Activated T-helper 1 cell treated with anti-CD3 and anti-CD28 coated beads, Interleukin-12 subunit alpha, Interleukin-12 subunit beta, Interleukin-2, Interleukin-4 antibody, amounts not matched to agents 30 ng/mL and 10 ng/mL and 1 ng/mL, durations not matched to agents 14 hours and 24 hours and 36 hours (primary cell): ENCODE measurements at regions of chr7 and their contacts with region 1.

Region 1: DNA sequence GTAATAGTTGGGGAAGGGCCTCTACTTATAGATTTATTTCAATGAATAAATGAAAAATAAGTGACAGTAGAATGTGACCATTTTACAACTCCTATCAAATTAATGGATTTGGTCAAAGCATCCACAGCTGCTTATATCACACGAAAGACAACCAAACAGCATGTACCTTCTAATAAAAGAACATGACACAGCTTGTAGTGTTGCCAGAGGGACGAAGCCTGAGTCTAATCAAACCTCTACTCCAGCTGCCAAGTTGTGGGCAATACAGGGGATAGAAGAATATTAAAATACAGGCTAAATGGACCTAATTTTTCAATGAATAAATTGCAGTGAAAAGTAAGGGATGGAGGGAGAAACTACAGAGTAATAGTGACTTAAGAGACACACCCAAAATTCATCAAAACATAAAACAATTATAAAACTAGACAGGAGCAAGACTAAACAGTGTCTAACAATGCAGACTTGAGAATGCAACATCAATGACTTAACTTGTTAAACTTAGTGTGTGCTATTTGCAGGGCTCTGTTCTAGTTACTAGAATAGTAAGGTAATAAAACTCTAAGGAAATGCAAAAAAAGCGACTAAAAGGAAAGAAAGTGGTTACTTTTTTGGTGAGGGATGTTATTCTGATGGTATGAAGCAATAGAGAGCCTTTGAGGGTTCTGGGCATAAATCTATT is 853.8 kb downstream of the GRM8 start:
- DNase-seq: no peak
- H3K4me3 Mint-ChIP-seq: no peak overlapping the region
- H3K27ac Mint-ChIP-seq: no peak overlapping the region
- H3K4me1 Mint-ChIP-seq: no peaks in the 10 kb centered on the region
- H3K27me3 Mint-ChIP-seq: no peaks in the 10 kb centered on the region

Region 2: DNA sequence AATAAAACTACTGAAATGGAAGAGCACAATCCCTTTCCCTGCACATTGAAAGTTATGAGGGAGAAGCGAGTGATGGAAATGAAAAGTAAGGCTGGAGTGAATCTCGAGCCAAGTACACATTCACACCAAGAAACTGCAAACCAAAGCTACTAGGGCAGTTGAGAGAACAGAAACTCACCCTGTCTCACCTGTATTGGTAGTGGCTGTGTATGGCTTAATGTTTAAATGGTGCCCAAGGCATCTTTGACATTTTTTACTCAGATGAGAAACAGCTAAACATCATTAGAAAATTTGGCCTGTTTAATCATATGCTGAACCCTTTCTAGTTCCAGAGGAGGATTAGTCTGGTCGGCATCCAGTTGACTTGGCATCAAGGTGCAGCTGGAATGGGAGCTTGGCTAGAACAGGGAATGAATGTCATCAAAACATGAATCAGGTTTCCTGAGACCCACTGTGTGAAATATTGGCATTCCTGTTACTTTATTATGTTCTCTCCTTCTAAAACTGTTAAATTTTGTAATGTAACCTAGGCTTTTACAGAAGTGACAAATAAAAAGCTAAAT is 12.9 kb after region 1 on chr7:
- intact Hi-C with region 1: loop called (anchors 1 kb)
- DNase-seq: no peak
- H3K4me3 Mint-ChIP-seq: no peak overlapping the region
- H3K27ac Mint-ChIP-seq: no peak overlapping the region
- H3K4me1 Mint-ChIP-seq: no peaks in the 10 kb centered on the region
- H3K27me3 Mint-ChIP-seq: no peaks in the 10 kb centered on the region